Activated naive CD4-positive, alpha-beta T cell treated with anti-CD3 and anti-CD28 coated beads for 36 hours (primary cell): ENCODE measurements at regions of chr9 and their contacts with region 1.

Region 1: GRCh38 chr9:131334629-131335367 is 45.3 kb downstream of the PLPP7 start:
- DNase-seq: no peak
- H3K4me3 Mint-ChIP-seq: no peak overlapping the region
- H3K27ac Mint-ChIP-seq: no peak overlapping the region
- H3K4me1 Mint-ChIP-seq: peaks cover 3% of the 10 kb centered on the region
- H3K27me3 Mint-ChIP-seq: no peaks in the 10 kb centered on the region

Region 2: GRCh38 chr9:130672466-130672865 is 662.3 kb before region 1 on chr9:
- CTCF ChIA-PET with region 1: no interaction called
- intact Hi-C with region 1: no loop called
- DNase-seq: no peak
- H3K4me3 Mint-ChIP-seq: no peak overlapping the region
- H3K27ac Mint-ChIP-seq: no peak overlapping the region
- H3K4me1 Mint-ChIP-seq: no peaks in the 10 kb centered on the region
- H3K27me3 Mint-ChIP-seq: peaks cover 9% of the 10 kb centered on the region

Region 3: GRCh38 chr9:131053896-131054295 is 280.9 kb before region 1 on chr9:
- CTCF ChIA-PET with region 1: interaction called, 29 read pairs
- intact Hi-C with region 1: loop called (anchors 1 kb)
- DNase-seq: no peak
- H3K4me3 Mint-ChIP-seq: no peak overlapping the region
- H3K27ac Mint-ChIP-seq: no peak overlapping the region
- H3K4me1 Mint-ChIP-seq: no peaks in the 10 kb centered on the region
- H3K27me3 Mint-ChIP-seq: no peaks in the 10 kb centered on the region

Region 4: GRCh38 chr9:131160416-131161112 is 174.2 kb before region 1 on chr9:
- CTCF ChIA-PET with region 1: no interaction called
- intact Hi-C with region 1: no loop called
- DNase-seq: no peak
- H3K4me3 Mint-ChIP-seq: no peak overlapping the region
- H3K27ac Mint-ChIP-seq: no peak overlapping the region
- H3K4me1 Mint-ChIP-seq: no peaks in the 10 kb centered on the region
- H3K27me3 Mint-ChIP-seq: no peaks in the 10 kb centered on the region

Region 5: GRCh38 chr9:131178382-131178781 is 156.4 kb before region 1 on chr9:
- CTCF ChIA-PET with region 1: interaction called, 83 read pairs
- intact Hi-C with region 1: loop called (anchors 1 kb)
- DNase-seq: peak; percentile 81
- H3K4me3 Mint-ChIP-seq: no peak overlapping the region
- H3K27ac Mint-ChIP-seq: no peak overlapping the region
- H3K4me1 Mint-ChIP-seq: no peaks in the 10 kb centered on the region
- H3K27me3 Mint-ChIP-seq: no peaks in the 10 kb centered on the region

Region 6: GRCh38 chr9:131214286-131214856 is 120.4 kb before region 1 on chr9:
- CTCF ChIA-PET with region 1: interaction called, 12 read pairs
- intact Hi-C with region 1: no loop called
- DNase-seq: no peak
- H3K4me3 Mint-ChIP-seq: no peak overlapping the region
- H3K27ac Mint-ChIP-seq: no peak overlapping the region
- H3K4me1 Mint-ChIP-seq: peaks cover 5% of the 10 kb centered on the region
- H3K27me3 Mint-ChIP-seq: no peaks in the 10 kb centered on the region

Region 7: GRCh38 chr9:131237931-131238401 is 96.8 kb before region 1 on chr9:
- CTCF ChIA-PET with region 1: interaction called, 8 read pairs
- intact Hi-C with region 1: loop called (anchors 5 kb)
- DNase-seq: peak; percentile 95
- H3K4me3 Mint-ChIP-seq: peak overlapping the region; percentile 66
- H3K27ac Mint-ChIP-seq: peak overlapping the region; percentile 95
- H3K4me1 Mint-ChIP-seq: peaks cover 34% of the 10 kb centered on the region
- H3K27me3 Mint-ChIP-seq: no peaks in the 10 kb centered on the region

Region 8: GRCh38 chr9:131289301-131290038 is 45.3 kb before region 1 on chr9 and contains the start of gene PLPP7:
- CTCF ChIA-PET with region 1: interaction called, 11 read pairs
- intact Hi-C with region 1: no loop called
- DNase-seq: no peak
- H3K4me3 Mint-ChIP-seq: peak within 1 kb of the TSS; percentile 36
- H3K27ac Mint-ChIP-seq: no peak within 1 kb of the TSS
- H3K4me1 Mint-ChIP-seq: no peaks in the 10 kb centered on the region
- H3K27me3 Mint-ChIP-seq: no peaks in the 10 kb centered on the region
- total RNA-seq, gene PLPP7: 0.25 to 0.26 TPM